ENCODE measurements at regions of chr4 and their contacts with region 1.

Region 1: DNA sequence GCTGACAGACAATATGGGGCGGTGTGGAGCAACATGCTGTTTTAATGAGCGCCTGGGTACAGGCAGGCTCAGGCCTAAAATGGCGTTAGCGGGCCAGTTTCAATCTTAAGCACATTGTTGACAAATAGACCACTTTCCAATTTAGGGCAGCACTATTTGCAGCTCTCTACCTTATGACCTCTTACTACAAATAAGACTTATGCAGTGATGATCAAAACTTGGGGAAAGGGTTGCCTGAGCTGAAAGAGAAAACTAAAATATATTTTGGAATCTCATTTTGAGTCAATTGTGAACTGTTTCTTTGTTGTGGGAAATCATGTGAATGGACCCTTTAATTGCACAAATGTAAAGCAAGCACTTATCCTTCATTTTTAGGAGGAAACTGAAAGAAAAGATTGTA is 25.5 kb upstream of the GPAT3 start:
- DNase-seq: no peak
- H3K4me3 Mint-ChIP-seq: no peak overlapping the region
- H3K27ac Mint-ChIP-seq: no peak overlapping the region
- H3K4me1 Mint-ChIP-seq: no peaks in the 10 kb centered on the region
- H3K27me3 Mint-ChIP-seq: peaks cover 2% of the 10 kb centered on the region

Region 2: GRCh38 chr4:83498187-83498586 is 12.3 kb before region 1 on chr4:
- CTCF ChIA-PET with region 1: interaction called, 34 read pairs
- POLR2A ChIA-PET with region 1: no interaction called
- DNase-seq: no peak
- H3K4me3 Mint-ChIP-seq: no peak overlapping the region
- H3K27ac Mint-ChIP-seq: no peak overlapping the region
- H3K4me1 Mint-ChIP-seq: no peaks in the 10 kb centered on the region
- H3K27me3 Mint-ChIP-seq: no peaks in the 10 kb centered on the region

Region 3: GRCh38 chr4:83644677-83645659 is 134.5 kb after region 1 on chr4:
- CTCF ChIA-PET with region 1: interaction called, 18 read pairs
- POLR2A ChIA-PET with region 1: no interaction called
- DNase-seq: peak; percentile 63
- H3K4me3 Mint-ChIP-seq: no peak overlapping the region
- H3K27ac Mint-ChIP-seq: no peak overlapping the region
- H3K4me1 Mint-ChIP-seq: peaks cover 1% of the 10 kb centered on the region
- H3K27me3 Mint-ChIP-seq: peaks cover 9% of the 10 kb centered on the region